CD4-positive, alpha-beta T cell (primary cell): ENCODE measurements at regions of chr13 and their contacts with region 1.

Region 1: DNA sequence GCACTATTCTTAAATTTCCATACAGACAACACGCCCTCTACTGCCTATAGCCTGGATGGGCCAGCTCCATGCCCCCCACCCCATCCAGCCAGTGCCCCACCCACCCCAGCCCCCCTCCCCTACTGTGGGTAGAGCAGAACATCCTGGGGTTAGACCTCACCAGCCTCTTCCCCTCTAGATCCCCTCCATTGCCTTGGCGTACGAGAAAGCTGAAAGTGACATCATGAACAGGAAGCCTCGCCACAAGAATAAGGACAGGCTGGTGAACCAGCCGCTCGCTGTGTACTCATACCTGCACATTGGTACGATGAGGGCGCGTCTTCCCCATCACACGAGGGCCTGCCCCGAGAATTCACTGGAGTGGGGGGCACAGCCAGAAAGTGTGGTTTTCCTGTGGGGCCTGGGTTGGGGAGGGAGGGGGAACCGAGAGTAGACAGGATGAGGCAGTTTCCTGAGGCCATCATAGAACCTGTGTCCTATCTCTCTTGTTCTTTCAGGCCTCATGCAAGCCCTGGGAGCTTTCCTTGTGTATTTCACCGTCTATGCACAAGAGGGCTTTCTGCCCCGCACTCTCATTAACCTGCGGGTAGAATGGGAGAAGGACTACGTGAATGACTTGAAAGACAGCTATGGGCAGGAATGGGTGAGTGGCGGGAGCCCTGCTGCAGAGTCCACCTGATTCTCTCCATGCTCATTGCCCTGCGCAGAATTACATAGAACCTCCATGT is 29.1 kb downstream of the ATP12A start:
- DNase-seq: peak; percentile 23 to 85 (median 50)
- ATAC-seq: peak; percentile 96
- H3K4me3 ChIP-seq: peak overlapping the region; percentile 27
- H3K4me3 Mint-ChIP-seq: peak overlapping the region; percentile 22
- H3K27ac ChIP-seq: no peak overlapping the region
- H3K27ac Mint-ChIP-seq: peak overlapping the region; percentile 77
- H3K4me1 ChIP-seq: peaks cover 17% of the 10 kb centered on the region
- H3K4me1 Mint-ChIP-seq: peaks cover 14% of the 10 kb centered on the region
- H3K27me3 ChIP-seq: no peaks in the 10 kb centered on the region
- H3K27me3 Mint-ChIP-seq: no peaks in the 10 kb centered on the region
- CTCF ChIP-seq: peak; percentile 3

Region 2: DNA sequence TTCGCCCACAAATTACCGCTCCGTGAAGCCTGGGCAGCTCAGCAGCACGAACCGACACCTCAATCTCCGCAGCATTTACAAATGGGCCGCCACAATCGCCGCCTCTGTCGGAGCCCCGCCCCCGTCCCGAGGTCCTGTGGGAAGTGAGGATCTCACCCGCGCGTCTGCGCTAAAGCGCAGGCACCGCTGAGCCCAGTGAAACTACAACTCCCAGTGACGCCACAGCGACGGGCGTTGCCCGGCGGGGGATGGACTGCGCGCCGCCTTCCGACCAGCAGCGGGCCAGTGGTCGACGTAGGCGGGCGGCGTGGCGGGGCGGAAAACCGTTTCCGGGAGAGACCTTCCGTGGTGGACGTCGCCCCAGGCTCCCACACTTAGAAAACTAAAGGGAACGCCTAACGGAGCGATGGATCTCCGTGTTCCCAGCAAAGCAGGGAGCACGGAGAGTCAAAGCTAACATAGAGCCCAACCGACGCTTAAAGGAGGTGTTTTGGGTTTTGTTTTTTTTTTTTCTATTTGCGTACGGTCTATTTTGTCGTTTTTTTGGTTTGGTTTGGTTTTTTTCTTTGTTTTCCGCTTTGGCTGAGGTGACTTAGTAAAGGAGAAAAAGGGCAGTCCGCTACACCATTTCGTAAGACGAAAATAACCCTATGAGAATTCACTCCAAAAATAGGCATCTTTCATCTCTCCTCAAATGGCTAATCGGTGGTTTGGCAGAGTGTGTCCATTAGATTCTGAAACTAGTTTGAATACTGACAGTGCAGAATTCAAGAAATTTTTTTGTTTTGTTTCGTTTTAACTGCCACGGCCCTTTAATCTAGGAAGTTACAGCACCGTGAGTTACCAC is 213.6 kb after region 1 on chr13:
- CTCF ChIA-PET with region 1: no interaction called
- POLR2A ChIA-PET with region 1: no interaction called
- intact Hi-C with region 1: loop called in 1 of 2 experiments (anchors 1 kb)
- DNase-seq: peak; percentile 84 to 97 (median 90)
- ATAC-seq: peak; percentile 98
- H3K4me3 ChIP-seq: peak overlapping the region; percentile 91
- H3K4me3 Mint-ChIP-seq: peak overlapping the region; percentile 91
- H3K27ac ChIP-seq: peak overlapping the region; percentile 70 to 93
- H3K27ac Mint-ChIP-seq: peak overlapping the region; percentile 90
- H3K4me1 ChIP-seq: peaks cover 5% of the 10 kb centered on the region
- H3K4me1 Mint-ChIP-seq: peaks cover 18% of the 10 kb centered on the region
- H3K27me3 ChIP-seq: peaks cover 0 to under 1% of the 10 kb centered on the region in 2 experiments
- H3K27me3 Mint-ChIP-seq: no peaks in the 10 kb centered on the region
- CTCF ChIP-seq: no peak